ENCODE measurements at regions of chr20 and their contacts with region 1.

Region 1: DNA sequence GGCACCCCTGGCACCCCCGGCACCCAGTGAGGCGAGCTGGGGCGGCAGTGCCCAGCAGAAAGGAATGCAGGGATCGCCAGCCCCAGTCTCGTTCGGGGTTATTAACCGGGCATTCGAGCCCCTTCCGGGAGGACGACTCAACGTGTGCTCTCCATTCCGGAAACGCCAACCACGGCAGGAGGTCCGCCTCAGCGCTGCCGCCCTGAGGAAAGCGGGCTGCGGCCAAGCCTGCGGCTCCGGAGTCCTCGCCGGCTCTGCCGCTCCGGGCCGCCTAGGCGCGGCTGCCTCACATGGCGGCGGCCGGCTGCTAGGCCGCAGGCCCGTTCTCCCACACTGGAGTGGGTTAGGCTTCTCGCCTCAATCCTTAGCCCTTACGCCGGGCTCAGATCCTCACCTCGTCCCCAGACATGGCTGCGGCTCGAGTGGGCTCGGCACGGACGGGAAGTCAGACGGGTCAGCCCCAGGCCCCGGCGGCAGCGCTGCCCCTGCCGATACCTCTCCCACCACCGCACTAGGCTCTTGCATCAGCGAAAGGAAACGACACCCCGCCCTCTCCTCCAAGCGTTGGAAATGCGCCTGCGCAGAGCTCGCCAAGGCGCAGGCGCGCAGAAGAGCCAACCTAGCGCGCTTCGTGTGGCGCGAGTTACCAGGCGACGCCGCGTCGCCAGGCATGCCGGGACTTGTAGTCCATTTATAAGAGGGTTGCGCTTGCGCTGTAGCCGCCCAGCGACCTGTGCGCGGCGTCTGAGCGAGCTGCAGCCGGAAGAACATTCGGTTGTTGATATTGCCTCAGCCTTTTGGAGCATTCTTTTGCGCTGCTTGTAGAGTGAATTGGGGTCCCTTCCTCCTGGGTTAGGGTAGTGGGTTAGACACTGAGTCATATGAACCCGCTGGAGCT is at the start of gene EIF2S2:
- DNase-seq: peak; percentile 86 to 99 (median 89)

Region 2: GRCh38 chr20:33810885-33811777 is 300.8 kb before region 1 on chr20 and contains the start of gene CHMP4B:
- intact Hi-C with region 1: loop called (anchors 2 kb)
- DNase-seq: peak; percentile 98 to 100 (median 99)

Region 3: GRCh38 chr20:34045294-34045693 is 66.7 kb before region 1 on chr20:
- intact Hi-C with region 1: no loop called
- DNase-seq: no peak

Region 4: DNA sequence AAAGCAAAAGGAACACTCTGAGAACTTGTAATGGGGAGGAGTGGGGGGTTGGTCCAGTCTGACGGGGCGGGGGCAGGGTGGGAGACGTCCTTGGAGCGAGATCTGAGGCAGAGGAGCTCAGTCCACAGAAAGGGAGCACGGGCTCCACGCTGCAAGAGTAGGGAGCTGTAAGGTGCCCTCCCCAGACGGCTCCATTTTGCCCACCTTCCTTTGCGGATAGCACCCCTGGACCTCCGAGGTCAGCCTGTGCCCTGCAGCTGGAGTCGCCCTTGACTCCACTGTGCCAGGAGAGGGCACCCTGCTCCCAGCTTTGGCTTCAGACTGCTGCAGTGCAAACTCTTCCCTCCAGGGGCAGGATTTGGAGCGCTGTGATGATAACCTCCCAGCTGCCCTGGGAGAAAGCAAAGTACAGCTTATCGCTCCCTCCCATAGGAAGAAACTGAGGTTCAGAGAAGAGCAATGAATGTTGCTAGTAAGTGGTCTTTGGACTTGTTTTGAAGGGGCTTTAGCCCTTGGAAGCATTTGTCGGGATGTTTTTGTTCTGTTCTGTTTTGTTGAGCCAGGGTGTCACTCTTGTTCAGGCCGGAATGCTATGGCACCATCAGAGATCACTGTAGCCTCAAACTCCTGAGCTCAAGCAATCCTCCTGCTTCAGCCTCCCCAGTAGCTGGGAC is 200.7 kb after region 1 on chr20:
- intact Hi-C with region 1: no loop called
- DNase-seq: peak; percentile 77 to 98 (median 90)